Ascending aorta (tissue), 2 donors: ENCODE measurements at regions of chr10 and their contacts with region 1.

Region 1: GRCh38 chr10:79195091-79195923 is 126.5 kb downstream of the ZMIZ1 start:
- DNase-seq: peak; percentile 36 to 93
- H3K4me3 ChIP-seq: no peak overlapping the region
- H3K27ac ChIP-seq: peak overlapping the region in 1 of 2 donors; percentile 62
- H3K4me1 ChIP-seq: peaks cover 3 to 7% of the 10 kb centered on the region in 2 donors
- H3K27me3 ChIP-seq: no peaks in the 10 kb centered on the region
- CTCF ChIP-seq: peak; percentile 89 to 97 (median 93)

Region 2: GRCh38 chr10:78047314-78047891 is 1147.9 kb before region 1 on chr10:
- intact Hi-C with region 1: loop called (anchors 1 kb)
- DNase-seq: peak in 1 of 2 donors; percentile 92
- H3K4me3 ChIP-seq: no peak overlapping the region
- H3K27ac ChIP-seq: no peak overlapping the region
- H3K4me1 ChIP-seq: no peaks in the 10 kb centered on the region
- H3K27me3 ChIP-seq: no peaks in the 10 kb centered on the region
- CTCF ChIP-seq: peak; percentile 85 to 92 (median 86)

Region 3: GRCh38 chr10:78432583-78432982 is 762.7 kb before region 1 on chr10:
- intact Hi-C with region 1: loop called (anchors 5 kb)
- DNase-seq: no peak
- H3K4me3 ChIP-seq: no peak overlapping the region
- H3K27ac ChIP-seq: peak overlapping the region in 1 of 2 donors; percentile 41
- H3K4me1 ChIP-seq: peaks cover 17 to 33% of the 10 kb centered on the region in 2 donors
- H3K27me3 ChIP-seq: no peaks in the 10 kb centered on the region
- CTCF ChIP-seq: no peak

Region 4: DNA sequence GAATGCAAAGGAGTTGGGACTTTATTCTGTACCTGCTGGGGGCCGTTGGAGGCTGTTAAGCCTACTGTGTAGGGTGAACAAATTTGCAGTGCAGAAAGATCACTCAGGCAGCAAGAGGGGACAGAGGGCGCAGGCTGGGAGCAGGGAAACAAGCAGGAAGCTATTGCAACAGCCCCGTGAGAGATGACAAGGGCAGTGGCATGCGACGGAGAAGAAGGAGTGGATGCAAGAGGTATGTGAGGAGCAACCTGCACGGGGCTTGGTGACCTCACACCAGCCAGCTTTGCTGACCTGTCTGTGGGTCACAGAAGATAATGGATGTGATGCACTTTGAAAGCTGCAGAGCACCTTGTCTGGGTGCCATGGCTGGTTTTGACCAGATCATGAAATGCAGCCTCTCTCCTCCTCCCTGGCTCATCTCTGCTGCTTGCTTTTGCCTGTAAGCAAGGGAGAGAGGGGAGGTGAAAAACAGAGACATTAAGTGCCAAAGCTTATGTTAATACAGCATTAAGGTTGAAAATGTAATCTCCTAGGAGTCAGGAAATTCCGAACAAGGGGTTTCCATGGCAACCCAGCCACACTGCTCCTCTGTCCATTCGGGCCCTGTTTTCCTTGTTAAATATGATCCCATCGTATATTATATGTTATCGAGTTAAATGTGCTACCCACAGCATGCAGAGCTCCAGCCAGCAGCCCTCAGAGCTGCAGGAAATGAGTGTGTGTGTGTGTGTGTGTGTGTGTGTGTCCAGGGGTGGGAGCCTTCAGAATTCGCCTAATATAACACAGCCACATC is 440.8 kb before region 1 on chr10:
- intact Hi-C with region 1: no loop called
- DNase-seq: no peak
- H3K4me3 ChIP-seq: no peak overlapping the region
- H3K27ac ChIP-seq: no peak overlapping the region
- H3K4me1 ChIP-seq: peaks cover 3 to 4% of the 10 kb centered on the region in 2 donors
- H3K27me3 ChIP-seq: no peaks in the 10 kb centered on the region
- CTCF ChIP-seq: no peak

Region 5: DNA sequence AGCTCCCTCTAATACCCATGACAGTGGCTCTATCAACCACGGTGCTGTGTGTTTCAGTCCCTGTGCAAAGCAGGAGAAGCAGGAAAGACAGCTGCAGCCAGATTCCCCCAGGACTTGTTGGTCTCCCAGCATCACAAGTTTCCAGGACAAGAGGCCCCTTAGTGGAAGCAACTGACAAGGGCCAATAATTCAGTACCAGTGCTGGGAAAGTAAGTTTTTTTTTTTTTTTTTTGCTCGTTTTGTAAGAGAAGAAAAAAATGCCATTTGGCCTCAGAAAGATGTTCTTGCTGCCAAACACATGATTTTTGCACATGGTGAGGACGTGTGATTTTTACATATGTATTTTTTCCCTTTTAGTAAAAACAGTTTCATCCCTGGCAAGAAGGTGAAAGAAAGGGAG is 410.8 kb before region 1 on chr10:
- intact Hi-C with region 1: loop called (anchors 10 kb)
- DNase-seq: no peak
- H3K4me3 ChIP-seq: no peak overlapping the region
- H3K27ac ChIP-seq: no peak overlapping the region
- H3K4me1 ChIP-seq: peaks cover 3 to 12% of the 10 kb centered on the region in 2 donors
- H3K27me3 ChIP-seq: no peaks in the 10 kb centered on the region
- CTCF ChIP-seq: no peak

Region 6: GRCh38 chr10:78991187-78991586 is 204.1 kb before region 1 on chr10:
- intact Hi-C with region 1: no loop called
- DNase-seq: no peak
- H3K4me3 ChIP-seq: no peak overlapping the region
- H3K27ac ChIP-seq: no peak overlapping the region
- H3K4me1 ChIP-seq: no peaks in the 10 kb centered on the region
- H3K27me3 ChIP-seq: no peaks in the 10 kb centered on the region
- CTCF ChIP-seq: no peak

Region 7: DNA sequence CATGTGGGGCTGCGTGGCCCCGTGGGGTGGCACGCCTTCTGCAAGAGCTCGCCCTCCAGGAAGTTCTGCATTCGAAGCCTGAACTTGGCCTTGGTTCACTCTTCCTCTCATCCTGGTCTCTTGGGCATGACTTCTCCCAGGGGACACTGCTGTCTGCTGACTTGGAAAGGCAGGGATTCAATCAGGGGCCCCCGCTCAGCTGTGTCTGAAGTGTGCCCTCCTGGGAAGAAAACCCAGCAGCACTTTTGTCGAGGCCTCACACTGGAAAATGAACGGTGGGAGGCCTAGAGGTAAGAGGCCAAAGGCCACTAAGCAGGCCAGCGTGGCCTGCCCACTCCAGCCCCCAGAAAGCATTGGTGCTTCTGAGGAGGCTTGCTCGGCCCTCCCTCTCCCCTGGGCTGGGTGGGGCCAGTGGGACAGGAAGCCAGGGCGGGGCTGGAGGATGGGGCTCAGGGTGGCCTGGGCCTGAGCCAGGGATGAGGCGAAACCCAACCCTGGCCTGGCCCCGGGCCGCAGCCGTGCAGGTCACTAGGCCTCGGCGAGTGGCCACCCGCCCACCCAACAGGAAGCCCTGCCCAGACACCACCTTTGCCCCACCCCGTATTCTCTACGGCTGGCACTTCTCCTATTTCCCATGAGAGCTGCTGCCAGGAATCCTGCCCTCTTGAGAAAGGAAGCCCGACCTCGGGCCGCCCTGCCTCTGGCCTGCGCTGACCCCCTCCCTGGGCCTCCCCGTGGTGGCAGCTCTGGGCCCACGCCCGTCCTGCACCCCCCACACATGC is 45.5 kb before region 1 on chr10:
- intact Hi-C with region 1: loop called (anchors 10 kb)
- DNase-seq: peak; percentile 60 to 81
- H3K4me3 ChIP-seq: no peak overlapping the region
- H3K27ac ChIP-seq: peak overlapping the region; percentile 87 to 88
- H3K4me1 ChIP-seq: peaks cover 48 to 89% of the 10 kb centered on the region in 2 donors
- H3K27me3 ChIP-seq: no peaks in the 10 kb centered on the region
- CTCF ChIP-seq: no peak